CD14-positive monocyte (primary cell): ENCODE measurements at regions of chr14 and their contacts with region 1.

Region 1: DNA sequence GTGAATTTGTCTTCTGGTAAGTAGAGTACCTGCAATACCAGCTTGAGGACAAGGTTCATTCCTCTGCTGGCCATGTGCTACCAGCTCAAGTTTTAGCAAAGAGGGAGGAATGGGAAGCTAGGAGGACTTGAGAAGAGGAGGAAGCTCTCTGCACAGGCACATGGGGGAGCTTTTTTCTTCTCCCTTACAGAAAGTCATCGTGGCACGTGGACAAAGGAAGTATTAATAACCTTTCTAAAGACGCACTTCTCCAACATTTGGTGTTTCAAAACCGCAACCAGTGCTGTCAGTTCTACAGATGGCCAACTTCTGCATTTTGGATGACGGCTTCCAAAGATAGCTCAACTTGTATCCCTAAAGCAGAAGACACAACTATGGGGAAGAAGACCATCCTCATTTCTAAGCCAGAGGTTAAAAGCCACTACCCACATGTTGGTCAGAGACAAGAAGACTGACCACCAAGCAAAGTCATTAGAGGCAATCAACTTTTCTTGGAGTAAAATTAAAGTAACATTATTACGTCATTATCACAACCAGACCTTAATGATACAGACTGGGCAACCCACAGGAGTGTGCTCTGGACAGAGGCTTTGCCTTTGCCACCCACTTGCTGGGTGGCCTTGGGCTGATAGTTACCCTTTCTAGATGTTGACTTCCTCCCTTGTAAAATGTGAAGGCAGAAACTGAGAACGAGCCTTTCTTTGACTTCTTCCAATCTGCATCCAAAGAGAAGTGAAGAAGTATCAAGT is 12.3 kb upstream of the TMED10 start:
- DNase-seq: peak; percentile 95 to 99 (median 97)
- H3K4me3 ChIP-seq: peak overlapping the region in 1 of 3 experiments; percentile 31
- H3K4me3 Mint-ChIP-seq: peak overlapping the region in 1 of 2 donors; percentile 28
- H3K27ac ChIP-seq: peak overlapping the region; percentile 74 to 82
- H3K27ac Mint-ChIP-seq: peak overlapping the region; percentile 92 to 96 (median 94)
- H3K4me1 ChIP-seq: peaks cover 56 to 68% of the 10 kb centered on the region in 2 donors
- H3K4me1 Mint-ChIP-seq: peaks cover 57% of the 10 kb centered on the region
- H3K27me3 ChIP-seq: no peaks in the 10 kb centered on the region
- H3K27me3 Mint-ChIP-seq: no peaks in the 10 kb centered on the region
- CTCF ChIP-seq: no peak

Region 2: DNA sequence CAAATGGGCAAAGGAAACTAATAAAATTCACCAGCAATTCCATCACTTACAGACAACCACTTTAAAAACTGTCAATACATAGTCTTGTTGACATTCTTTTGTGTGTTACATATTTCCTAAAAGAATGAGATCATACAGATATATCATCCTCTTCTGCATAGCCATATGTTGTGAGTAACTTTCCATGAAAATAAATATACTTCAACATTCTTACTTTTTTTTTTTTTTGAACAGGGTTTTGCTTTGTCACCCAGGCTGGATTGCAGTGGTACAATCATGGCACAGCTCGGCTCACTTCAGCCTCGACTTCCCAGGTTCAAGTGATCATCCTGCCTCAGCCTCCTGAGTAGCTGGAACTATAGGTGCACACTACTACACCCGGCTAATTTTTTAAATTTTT is 98.3 kb before region 1 on chr14:
- intact Hi-C with region 1: no loop called
- DNase-seq: no peak
- H3K4me3 ChIP-seq: no peak overlapping the region
- H3K4me3 Mint-ChIP-seq: no peak overlapping the region
- H3K27ac ChIP-seq: no peak overlapping the region
- H3K27ac Mint-ChIP-seq: peak overlapping the region in 1 of 7 donors; percentile 10
- H3K4me1 ChIP-seq: no peaks in the 10 kb centered on the region
- H3K4me1 Mint-ChIP-seq: no peaks in the 10 kb centered on the region
- H3K27me3 ChIP-seq: no peaks in the 10 kb centered on the region
- H3K27me3 Mint-ChIP-seq: no peaks in the 10 kb centered on the region
- CTCF ChIP-seq: no peak

Region 3: GRCh38 chr14:75126679-75127473 is 61.8 kb before region 1 on chr14 and contains the start of gene NEK9:
- intact Hi-C with region 1: no loop called
- DNase-seq: peak; percentile 77 to 86 (median 85)
- H3K4me3 ChIP-seq: peak within 1 kb of the TSS; percentile 61 to 78 (median 62)
- H3K4me3 Mint-ChIP-seq: peak within 1 kb of the TSS; percentile 82 to 95
- H3K27ac ChIP-seq: peak within 1 kb of the TSS; percentile 91 to 97
- H3K27ac Mint-ChIP-seq: peak within 1 kb of the TSS; percentile 97 to 99 (median 98)
- H3K4me1 ChIP-seq: peaks cover 47 to 54% of the 10 kb centered on the region in 2 donors
- H3K4me1 Mint-ChIP-seq: peaks cover 49% of the 10 kb centered on the region
- H3K27me3 ChIP-seq: no peaks in the 10 kb centered on the region
- H3K27me3 Mint-ChIP-seq: peaks cover 0 to 1% (median 0%) of the 10 kb centered on the region in 3 donors
- CTCF ChIP-seq: no peak
- polyA plus RNA-seq, gene NEK9: 8.9 to 27.8 (median 10.1) TPM

Region 4: GRCh38 chr14:75147423-75148071 is 41.1 kb before region 1 on chr14:
- intact Hi-C with region 1: loop called in 1 of 2 experiments (anchors 5 kb)
- DNase-seq: peak; percentile 68 to 74 (median 74)
- H3K4me3 ChIP-seq: no peak overlapping the region
- H3K4me3 Mint-ChIP-seq: no peak overlapping the region
- H3K27ac ChIP-seq: peak overlapping the region; percentile 10 to 65
- H3K27ac Mint-ChIP-seq: peak overlapping the region; percentile 84 to 92 (median 87)
- H3K4me1 ChIP-seq: peaks cover 50 to 71% of the 10 kb centered on the region in 2 donors
- H3K4me1 Mint-ChIP-seq: peaks cover 73% of the 10 kb centered on the region
- H3K27me3 ChIP-seq: no peaks in the 10 kb centered on the region
- H3K27me3 Mint-ChIP-seq: peaks cover 0 to 2% (median 0%) of the 10 kb centered on the region in 3 donors
- CTCF ChIP-seq: peak; percentile 43

Region 5: GRCh38 chr14:75223664-75224154 is 35.0 kb after region 1 on chr14:
- intact Hi-C with region 1: loop called (anchors 5 kb)
- DNase-seq: peak; percentile 47 to 70 (median 62)
- H3K4me3 ChIP-seq: no peak overlapping the region
- H3K4me3 Mint-ChIP-seq: peak overlapping the region in 1 of 2 donors; percentile 64
- H3K27ac ChIP-seq: no peak overlapping the region
- H3K27ac Mint-ChIP-seq: peak overlapping the region; percentile 65 to 84 (median 83)
- H3K4me1 ChIP-seq: peaks cover 52 to 62% of the 10 kb centered on the region in 2 donors
- H3K4me1 Mint-ChIP-seq: peaks cover 46% of the 10 kb centered on the region
- H3K27me3 ChIP-seq: no peaks in the 10 kb centered on the region
- H3K27me3 Mint-ChIP-seq: peaks cover 0 to 3% (median 0%) of the 10 kb centered on the region in 3 donors
- CTCF ChIP-seq: no peak